Esophagus muscularis mucosa (tissue), 4 donors: ENCODE measurements at regions of chr19 and their contacts with region 1.

Region 1: GRCh38 chr19:23395041-23395721 is at the start of gene ZNF91:
- DNase-seq: peak; percentile 99
- H3K4me3 ChIP-seq: peak within 1 kb of the TSS; percentile 73 to 85 (median 80)
- H3K27ac ChIP-seq: peak within 1 kb of the TSS; percentile 92 to 96 (median 93)
- H3K4me1 ChIP-seq: peaks cover 33 to 49% (median 48%) of the 10 kb centered on the region in 4 donors
- H3K27me3 ChIP-seq: no peaks in the 10 kb centered on the region
- CTCF ChIP-seq: no peak
- EP300 ChIP-seq: no peak
- POLR2A ChIP-seq: peak; percentile 71
- total RNA-seq, gene ZNF91: 25.5 to 34.1 (median 30.4) TPM

Region 2: DNA sequence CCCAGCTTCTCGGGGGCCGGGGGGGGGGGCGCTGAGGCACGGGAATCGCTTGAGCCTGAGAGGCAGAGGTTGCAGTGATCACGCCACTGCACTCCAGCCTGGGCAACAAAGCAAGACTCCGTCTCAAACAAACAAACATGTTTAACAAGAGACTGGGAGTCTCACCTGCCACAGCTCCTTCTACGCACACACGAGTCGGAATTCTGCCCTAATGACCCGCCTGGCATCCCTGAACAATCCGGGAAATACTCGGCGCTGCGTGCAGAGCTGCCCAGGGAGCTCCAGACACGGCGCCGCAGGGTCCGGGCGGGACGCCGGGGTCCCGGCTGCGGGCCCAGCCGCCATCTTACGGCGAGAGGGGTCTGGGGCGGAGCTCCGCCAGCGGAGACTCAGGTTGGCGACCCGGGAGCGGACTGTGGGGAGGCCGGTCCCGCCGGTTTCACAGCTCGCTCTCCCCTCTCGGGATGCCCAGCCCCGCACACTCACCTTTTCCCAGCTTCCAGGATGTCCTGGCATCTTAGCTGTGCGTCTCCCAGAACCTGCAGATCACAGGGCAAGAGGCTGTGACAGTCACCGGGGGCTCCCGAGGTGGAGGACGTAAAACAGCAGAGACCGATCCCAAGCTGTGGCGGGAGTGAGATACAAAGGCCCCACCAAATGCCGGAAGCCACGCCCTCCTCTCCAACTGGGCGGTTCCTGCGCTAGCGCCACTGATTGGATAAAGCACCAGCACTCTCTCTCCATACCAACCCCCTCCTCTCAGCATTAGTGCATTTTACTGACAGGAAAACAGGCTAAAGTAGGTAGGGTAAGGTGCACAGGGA is 121.4 kb before region 1 on chr19:
- intact Hi-C with region 1: loop called (anchors 10 kb)
- DNase-seq: peak; percentile 98
- H3K4me3 ChIP-seq: peak overlapping the region; percentile 81 to 98 (median 97)
- H3K27ac ChIP-seq: peak overlapping the region; percentile 85 to 95 (median 90)
- H3K4me1 ChIP-seq: peaks cover 5 to 22% (median 19%) of the 10 kb centered on the region in 4 donors
- H3K27me3 ChIP-seq: no peaks in the 10 kb centered on the region
- CTCF ChIP-seq: no peak
- EP300 ChIP-seq: no peak
- POLR2A ChIP-seq: peak; percentile 15